ENCODE measurements at regions of chr11 and their contacts with region 1.

Region 1: DNA sequence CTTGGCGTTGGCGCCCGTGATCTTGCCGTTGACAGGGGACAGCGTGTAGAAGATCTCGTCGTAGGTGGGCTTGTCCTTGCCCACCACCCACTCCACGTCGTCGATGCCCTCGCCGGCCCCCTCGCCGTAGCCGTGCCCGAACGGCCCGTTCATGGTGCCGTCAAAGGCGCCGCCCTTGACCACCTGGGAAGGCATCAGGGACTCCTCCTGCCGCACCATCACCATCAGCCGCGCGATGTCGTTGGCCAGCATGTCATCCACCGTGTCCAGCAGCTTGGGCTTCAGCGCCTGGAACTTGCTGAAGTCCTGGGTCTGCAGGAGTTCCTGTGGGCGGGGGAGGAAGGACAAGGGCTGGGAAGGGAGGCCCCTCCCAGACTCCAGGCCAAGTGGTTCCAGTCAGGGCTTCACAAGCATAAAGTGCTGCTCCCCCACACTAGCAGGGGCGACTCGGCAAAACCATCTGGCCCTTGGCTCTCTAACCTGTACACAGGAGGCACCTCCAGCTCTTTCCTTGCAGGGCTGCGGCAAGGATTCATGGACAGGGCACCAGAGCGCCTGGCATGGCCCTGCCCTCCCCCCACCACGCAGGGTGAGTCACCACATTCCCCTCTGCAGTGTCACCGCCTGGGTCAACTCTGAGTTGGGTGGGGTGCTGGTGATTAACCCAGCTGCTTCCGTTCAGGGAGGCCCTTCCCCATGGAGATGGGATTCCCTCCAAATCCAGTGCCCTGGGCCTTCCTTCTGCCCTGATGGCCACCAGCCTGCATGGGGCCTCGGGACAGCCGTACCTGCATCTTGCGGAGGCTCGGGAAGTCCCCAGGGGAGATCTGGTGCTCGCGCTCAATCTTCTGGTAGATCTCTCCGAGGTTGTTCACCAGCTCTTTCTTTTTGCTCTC is 10.3 kb upstream of the CDC42BPG start:
- DNase-seq: peak in 1 of 5 donors; percentile 96
- H3K4me3 ChIP-seq: no peak overlapping the region
- H3K27ac ChIP-seq: peak overlapping the region; percentile 43 to 65
- H3K4me1 ChIP-seq: peaks cover 0 to 27% (median 0%) of the 10 kb centered on the region in 3 donors
- H3K27me3 ChIP-seq: no peaks in the 10 kb centered on the region
- CTCF ChIP-seq: no peak

Region 2: DNA sequence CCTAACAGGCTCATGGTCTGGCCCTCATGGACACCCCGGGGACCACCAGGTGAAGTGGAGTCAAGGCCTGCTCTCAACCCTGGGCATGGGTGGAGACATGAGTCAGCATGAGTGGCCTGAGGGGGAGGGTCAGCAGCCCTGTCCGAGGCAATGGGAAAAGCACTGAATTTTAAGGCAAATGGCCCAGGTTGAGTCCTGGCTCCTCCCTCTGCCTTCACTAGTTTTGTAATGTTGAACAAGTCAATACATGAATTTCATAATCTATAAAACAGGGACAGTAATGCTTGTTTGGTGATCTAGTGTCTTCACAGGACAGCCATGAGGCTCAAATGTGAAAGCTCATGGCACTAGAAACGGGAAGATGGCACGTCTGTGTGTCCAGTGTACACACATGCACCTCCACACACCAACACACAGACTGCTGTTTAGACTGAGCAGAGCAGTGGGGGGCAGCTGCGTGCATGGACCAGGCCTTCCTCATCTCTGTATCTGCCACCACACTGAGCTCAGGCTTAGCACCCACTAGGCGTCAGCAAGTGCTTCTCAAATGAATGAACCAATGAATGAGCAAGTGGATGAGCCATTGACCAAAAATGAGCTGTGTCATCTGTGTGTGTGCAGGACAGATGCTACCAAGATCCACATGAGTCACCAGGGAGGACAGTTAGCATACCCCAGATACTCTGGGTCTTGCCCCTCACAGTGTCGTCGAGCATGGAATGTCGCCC is 195.2 kb before region 1 on chr11:
- intact Hi-C with region 1: no loop called
- DNase-seq: no peak
- H3K4me3 ChIP-seq: no peak overlapping the region
- H3K27ac ChIP-seq: no peak overlapping the region
- H3K4me1 ChIP-seq: peaks cover 0 to 3% (median 0%) of the 10 kb centered on the region in 3 donors
- H3K27me3 ChIP-seq: no peaks in the 10 kb centered on the region
- CTCF ChIP-seq: no peak

Region 3: GRCh38 chr11:64894070-64894796 is 39.5 kb after region 1 on chr11:
- intact Hi-C with region 1: loop called (anchors 5 kb)
- DNase-seq: peak; percentile 53 to 93 (median 73)
- H3K4me3 ChIP-seq: no peak overlapping the region
- H3K27ac ChIP-seq: peak overlapping the region; percentile 47 to 57
- H3K4me1 ChIP-seq: peaks cover 0 to 18% (median 3%) of the 10 kb centered on the region in 3 donors
- H3K27me3 ChIP-seq: no peaks in the 10 kb centered on the region
- CTCF ChIP-seq: peak; percentile 84

Measured in kidney (tissue), 22 donors.